Activated naive CD4-positive, alpha-beta T cell treated with anti-CD3 and anti-CD28 coated beads for 36 hours (primary cell): ENCODE measurements at regions of chr1 and their contacts with region 1.

Region 1: DNA sequence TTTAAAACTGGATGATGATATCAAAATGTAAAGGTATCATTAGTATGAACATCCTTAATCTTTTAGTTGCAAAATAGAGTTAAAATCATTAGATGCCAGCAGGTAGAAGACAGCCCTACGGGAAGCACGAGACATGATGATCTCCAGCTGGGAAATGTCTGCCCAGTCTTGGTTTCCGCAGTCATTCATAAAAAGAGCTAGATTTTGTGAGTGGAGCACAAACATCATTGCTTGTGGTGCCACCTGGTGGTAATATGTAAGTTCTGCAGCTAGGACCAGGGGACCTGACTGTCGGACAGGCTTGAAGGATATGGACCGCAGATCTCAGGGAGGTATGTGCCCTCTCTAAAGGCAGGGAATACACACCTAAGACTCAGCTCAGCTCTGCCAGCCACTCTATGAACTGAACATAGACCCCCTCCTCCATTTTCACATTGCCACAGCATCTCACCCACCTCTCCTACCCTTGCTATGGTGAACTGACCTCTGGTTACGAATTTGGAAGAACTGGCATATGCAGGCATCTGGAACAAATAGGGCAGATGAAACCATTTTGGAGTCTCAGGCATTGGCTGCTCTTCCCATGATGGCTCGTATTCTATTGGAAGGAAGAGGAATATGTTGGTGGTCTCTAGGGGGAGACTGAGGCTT is 9.2 kb downstream of the FCMR start:
- DNase-seq: peak; percentile 81
- H3K4me3 Mint-ChIP-seq: no peak overlapping the region
- H3K27ac Mint-ChIP-seq: peak overlapping the region; percentile 47
- H3K4me1 Mint-ChIP-seq: peaks cover 84% of the 10 kb centered on the region
- H3K27me3 Mint-ChIP-seq: no peaks in the 10 kb centered on the region

Region 2: DNA sequence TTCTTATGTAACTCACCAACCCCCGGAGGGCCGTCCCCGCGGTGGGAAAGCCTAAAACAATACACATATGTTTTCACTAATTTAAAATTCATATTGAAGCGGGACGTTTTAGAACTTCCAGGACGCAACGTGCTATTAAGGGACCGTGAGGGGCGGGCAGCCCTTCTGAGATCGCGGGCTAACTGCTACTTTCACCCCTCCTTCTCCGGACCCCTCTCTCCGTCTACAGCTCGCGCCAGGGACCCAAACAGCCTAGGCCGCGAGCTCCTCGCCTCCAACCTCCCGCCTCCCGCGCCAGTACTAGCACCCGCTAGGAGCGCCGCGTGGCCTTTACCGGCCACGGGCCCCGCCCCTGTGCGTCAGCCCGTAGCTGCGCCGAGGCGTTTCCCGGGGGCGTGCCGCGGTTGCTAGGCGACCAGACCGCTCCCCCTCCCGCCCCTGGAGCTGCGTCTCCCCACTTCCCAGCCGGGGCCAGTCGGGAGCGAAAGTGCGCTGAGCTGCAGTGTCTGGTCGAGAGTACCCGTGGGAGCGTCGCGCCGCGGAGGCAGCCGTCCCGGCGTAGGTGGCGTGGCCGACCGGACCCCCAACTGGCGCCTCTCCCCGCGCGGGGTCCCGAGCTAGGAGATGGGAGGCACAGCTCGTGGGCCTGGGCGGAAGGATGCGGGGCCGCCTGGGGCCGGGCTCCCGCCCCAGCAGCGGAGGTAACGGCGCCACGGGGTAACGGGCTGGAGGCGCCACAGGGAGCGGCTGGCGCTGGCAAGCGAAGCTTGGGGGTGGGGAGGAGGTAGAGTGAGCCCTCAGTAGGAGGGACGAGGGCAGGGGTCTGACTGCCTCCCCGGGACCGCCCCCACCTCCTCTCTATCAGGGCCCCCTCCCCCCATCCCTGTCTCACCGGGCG is 277.2 kb before region 1 on chr1 and contains the start of gene DYRK3:
- CTCF ChIA-PET with region 1: interaction called, 12 read pairs
- intact Hi-C with region 1: loop called (anchors 1 kb)
- DNase-seq: peak; percentile 93
- H3K4me3 Mint-ChIP-seq: peak within 1 kb of the TSS; percentile 83
- H3K27ac Mint-ChIP-seq: peak within 1 kb of the TSS; percentile 92
- H3K4me1 Mint-ChIP-seq: peaks cover 27% of the 10 kb centered on the region
- H3K27me3 Mint-ChIP-seq: peaks cover 21% of the 10 kb centered on the region
- total RNA-seq, gene DYRK3: 6.5 to 6.7 TPM

Region 3: GRCh38 chr1:206766251-206766856 is 146.2 kb before region 1 on chr1:
- CTCF ChIA-PET with region 1: interaction called, 17 read pairs
- intact Hi-C with region 1: no loop called
- DNase-seq: peak; percentile 79
- H3K4me3 Mint-ChIP-seq: no peak overlapping the region
- H3K27ac Mint-ChIP-seq: no peak overlapping the region
- H3K4me1 Mint-ChIP-seq: peaks cover 63% of the 10 kb centered on the region
- H3K27me3 Mint-ChIP-seq: peaks cover 7% of the 10 kb centered on the region

Region 4: DNA sequence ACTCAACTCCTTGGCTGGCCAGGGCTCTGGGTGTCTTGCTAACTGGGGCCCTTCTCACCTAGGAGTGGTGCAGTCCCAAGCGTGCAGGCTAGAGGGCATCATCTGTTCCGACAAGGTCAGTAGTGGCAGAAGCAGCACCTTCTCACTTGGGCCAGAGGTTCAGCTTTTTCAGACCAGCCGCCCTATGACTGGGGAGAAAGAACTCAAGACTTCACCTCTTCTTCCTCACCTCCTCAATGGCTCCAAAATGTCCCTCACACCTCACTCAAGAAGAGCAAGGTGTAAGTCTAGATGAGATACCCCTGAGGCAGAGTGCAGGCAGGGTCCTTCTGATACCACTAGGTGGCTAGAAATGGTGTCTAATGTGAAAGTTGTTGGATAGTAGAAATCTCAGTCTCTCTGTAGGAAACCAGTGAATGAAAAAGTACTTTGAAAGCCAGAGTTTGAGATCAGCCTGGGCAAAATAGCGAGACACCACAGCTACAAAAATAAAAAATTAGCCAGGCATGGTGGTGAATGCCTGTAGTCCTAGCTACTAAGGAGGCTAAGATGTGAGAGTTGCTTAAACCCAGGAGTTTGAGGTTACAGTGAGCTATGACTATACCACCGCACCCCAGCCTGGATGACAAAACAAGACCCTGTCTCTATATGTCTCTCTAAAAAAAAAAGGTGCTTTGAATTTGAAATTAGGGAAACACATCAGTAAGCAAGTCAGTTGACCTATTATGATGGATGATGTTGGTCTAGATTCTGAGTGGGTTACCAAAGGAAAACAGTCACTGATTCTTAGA is 55.7 kb before region 1 on chr1:
- CTCF ChIA-PET with region 1: interaction called, 66 read pairs
- intact Hi-C with region 1: no loop called
- DNase-seq: no peak
- H3K4me3 Mint-ChIP-seq: no peak overlapping the region
- H3K27ac Mint-ChIP-seq: no peak overlapping the region
- H3K4me1 Mint-ChIP-seq: peaks cover 19% of the 10 kb centered on the region
- H3K27me3 Mint-ChIP-seq: no peaks in the 10 kb centered on the region

Region 5: DNA sequence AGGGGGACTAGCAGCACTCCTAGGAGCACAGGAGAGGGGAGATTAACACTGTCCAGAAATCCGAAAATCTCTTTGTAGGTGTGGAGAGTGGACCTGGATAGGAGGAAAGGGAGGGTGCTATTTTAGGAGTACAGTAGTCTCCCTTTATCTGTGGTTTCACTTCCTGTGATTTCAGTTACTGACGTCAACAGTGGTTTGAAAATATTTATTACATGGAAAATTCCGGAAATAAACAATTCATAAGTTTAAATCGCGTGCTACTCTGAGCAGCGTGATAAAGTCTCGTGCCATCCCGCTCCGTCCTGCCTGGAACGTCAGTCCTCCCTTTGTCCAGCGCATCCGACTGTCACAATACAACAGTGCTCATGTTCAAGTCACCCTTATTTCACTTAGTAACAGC is 21.9 kb before region 1 on chr1:
- CTCF ChIA-PET with region 1: interaction called, 12 read pairs
- intact Hi-C with region 1: loop called (anchors 1 kb)
- DNase-seq: no peak
- H3K4me3 Mint-ChIP-seq: no peak overlapping the region
- H3K27ac Mint-ChIP-seq: peak overlapping the region; percentile 64
- H3K4me1 Mint-ChIP-seq: peaks cover 68% of the 10 kb centered on the region
- H3K27me3 Mint-ChIP-seq: peaks cover 1% of the 10 kb centered on the region

Region 6: DNA sequence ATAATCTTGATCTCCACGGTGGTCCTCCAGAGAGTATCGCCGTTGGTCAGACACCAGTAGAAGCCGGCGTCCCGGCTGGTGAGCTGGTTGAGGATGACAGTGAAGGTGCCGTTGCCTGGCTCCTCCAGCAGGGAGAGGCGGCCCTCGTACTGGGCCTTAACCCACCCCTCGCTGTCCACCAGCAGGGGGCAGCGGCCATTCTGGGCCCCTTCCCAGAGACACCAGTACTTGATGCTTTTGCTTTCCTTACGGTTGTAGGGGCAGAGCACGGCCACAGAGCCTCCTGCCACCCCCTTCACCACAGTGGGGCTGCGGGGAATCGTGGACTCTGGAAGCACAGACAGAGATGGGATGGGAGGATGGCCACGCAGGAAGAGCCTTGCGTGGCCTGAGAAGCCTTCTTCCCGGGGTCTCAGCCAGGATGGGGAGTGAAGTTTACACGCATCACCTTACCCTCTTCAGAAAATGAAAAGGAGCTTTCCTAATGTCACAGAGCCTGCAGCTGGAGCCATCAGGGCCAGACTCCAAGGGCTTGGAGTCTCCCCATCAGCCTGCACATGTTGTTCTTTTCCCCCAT is 23.0 kb after region 1 on chr1:
- CTCF ChIA-PET with region 1: interaction called, 219 read pairs
- intact Hi-C with region 1: loop called (anchors 1 kb)
- DNase-seq: peak; percentile 66
- H3K4me3 Mint-ChIP-seq: no peak overlapping the region
- H3K27ac Mint-ChIP-seq: no peak overlapping the region
- H3K4me1 Mint-ChIP-seq: peaks cover 18% of the 10 kb centered on the region
- H3K27me3 Mint-ChIP-seq: no peaks in the 10 kb centered on the region

Region 7: DNA sequence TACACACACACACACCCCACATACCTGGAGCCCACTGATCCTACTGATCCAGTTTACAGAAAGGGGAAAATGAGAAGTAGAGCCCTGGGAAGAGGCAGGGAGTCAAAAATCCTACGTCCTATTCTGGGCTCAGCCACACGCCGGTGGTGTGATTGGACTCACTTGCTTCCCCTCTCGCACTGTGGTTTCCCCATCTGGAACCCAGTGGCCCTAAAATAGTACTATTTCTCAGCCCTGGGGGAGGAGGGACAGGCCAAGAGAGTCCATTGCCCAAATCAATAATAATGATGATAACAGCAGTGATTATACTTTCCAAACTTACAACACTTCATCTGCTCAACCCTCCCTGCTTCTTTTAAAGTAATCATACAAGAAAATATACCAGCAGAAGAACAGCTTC is 36.6 kb after region 1 on chr1:
- CTCF ChIA-PET with region 1: no interaction called
- intact Hi-C with region 1: no loop called
- DNase-seq: no peak
- H3K4me3 Mint-ChIP-seq: no peak overlapping the region
- H3K27ac Mint-ChIP-seq: no peak overlapping the region
- H3K4me1 Mint-ChIP-seq: no peaks in the 10 kb centered on the region
- H3K27me3 Mint-ChIP-seq: peaks cover 2% of the 10 kb centered on the region

Region 8: GRCh38 chr1:207017615-207018559 is 105.3 kb after region 1 on chr1:
- CTCF ChIA-PET with region 1: no interaction called
- intact Hi-C with region 1: no loop called
- DNase-seq: no peak
- H3K4me3 Mint-ChIP-seq: no peak overlapping the region
- H3K27ac Mint-ChIP-seq: no peak overlapping the region
- H3K4me1 Mint-ChIP-seq: no peaks in the 10 kb centered on the region
- H3K27me3 Mint-ChIP-seq: peaks cover 6% of the 10 kb centered on the region

Region 9: GRCh38 chr1:207103892-207104373 is 191.4 kb after region 1 on chr1 and contains the start of gene C4BPA:
- CTCF ChIA-PET with region 1: no interaction called
- intact Hi-C with region 1: no loop called
- DNase-seq: no peak
- H3K4me3 Mint-ChIP-seq: no peak within 1 kb of the TSS
- H3K27ac Mint-ChIP-seq: no peak within 1 kb of the TSS
- H3K4me1 Mint-ChIP-seq: no peaks in the 10 kb centered on the region
- H3K27me3 Mint-ChIP-seq: peaks cover 4% of the 10 kb centered on the region
- total RNA-seq, gene C4BPA: not detected